H1 (cell line): ENCODE measurements at regions of chr19 and their contacts with region 1.

Region 1: DNA sequence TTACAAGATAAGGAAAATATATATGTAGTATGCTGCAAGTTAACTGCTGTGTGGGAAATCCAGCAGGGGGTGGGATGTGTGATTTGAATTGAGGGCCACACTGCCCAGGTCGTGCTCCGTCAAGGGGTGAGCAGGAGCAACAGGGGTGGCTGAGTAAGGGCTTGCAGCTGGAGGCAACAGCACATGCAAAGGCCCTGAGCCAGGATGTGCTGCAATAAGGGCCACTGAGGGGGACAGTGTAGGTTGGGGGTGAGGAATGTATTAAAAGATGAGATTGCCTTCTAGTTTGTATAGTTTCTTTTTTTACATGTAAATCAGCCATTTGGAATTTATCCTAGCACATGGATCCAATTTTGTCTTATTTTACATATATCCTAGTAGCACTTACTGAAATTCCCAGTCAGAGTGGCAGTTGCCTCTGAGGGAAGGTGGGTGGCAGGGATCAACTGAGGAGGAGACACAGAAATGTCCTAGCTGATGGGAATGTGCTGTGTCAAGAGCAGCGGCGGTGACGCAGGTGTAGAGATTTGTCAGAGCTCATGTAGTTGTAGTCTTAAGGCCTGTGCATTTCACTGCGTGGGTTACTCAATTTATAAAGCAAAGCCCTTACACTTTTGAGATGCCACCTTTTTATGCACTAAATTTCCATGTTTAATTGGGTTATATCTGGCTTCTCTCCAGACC is 5.4 kb upstream of the RBM42 start:
- DNase-seq: no peak
- H3K4me3 ChIP-seq: no peak overlapping the region
- H3K27ac ChIP-seq: no peak overlapping the region
- H3K4me1 ChIP-seq: peaks cover 0 to 4% (median 1%) of the 10 kb centered on the region in 4 experiments; a peak in 2 of 7 replicates
- H3K27me3 ChIP-seq: no peaks in the 10 kb centered on the region
- CTCF ChIP-seq: no peak
- EP300 ChIP-seq: no peak
- POLR2A ChIP-seq: no peak
- RAD21 ChIP-seq: no peak

Region 2: GRCh38 chr19:35612559-35613321 is 10.7 kb before region 1 on chr19 and contains the start of gene HAUS5:
- CTCF ChIA-PET with region 1: interaction called, 14 read pairs
- POLR2A ChIA-PET with region 1: interaction called, 13 read pairs
- DNase-seq: peak; percentile 81 to 99
- H3K4me3 ChIP-seq: peak within 1 kb of the TSS; percentile 84 to 90 (median 86)
- H3K27ac ChIP-seq: peak within 1 kb of the TSS; percentile 78
- H3K4me1 ChIP-seq: peaks cover 0 to 4% (median 2%) of the 10 kb centered on the region in 4 experiments; a peak in 4 of 7 replicates
- H3K27me3 ChIP-seq: peaks cover 0 to 3% (median 0%) of the 10 kb centered on the region in 4 experiments; a peak in 1 of 7 replicates
- CTCF ChIP-seq: no peak
- EP300 ChIP-seq: no peak
- POLR2A ChIP-seq: peak in 1 of 2 experiments; percentile 90; a peak in 2 of 3 replicates
- RAD21 ChIP-seq: peak in 1 of 2 experiments; percentile 12; a peak in 1 of 4 replicates
- total RNA-seq, gene HAUS5: 18.9 and 25.7 TPM in 2 replicates